ENCODE measurements at regions of chr14 and their contacts with region 1.

Region 1: DNA sequence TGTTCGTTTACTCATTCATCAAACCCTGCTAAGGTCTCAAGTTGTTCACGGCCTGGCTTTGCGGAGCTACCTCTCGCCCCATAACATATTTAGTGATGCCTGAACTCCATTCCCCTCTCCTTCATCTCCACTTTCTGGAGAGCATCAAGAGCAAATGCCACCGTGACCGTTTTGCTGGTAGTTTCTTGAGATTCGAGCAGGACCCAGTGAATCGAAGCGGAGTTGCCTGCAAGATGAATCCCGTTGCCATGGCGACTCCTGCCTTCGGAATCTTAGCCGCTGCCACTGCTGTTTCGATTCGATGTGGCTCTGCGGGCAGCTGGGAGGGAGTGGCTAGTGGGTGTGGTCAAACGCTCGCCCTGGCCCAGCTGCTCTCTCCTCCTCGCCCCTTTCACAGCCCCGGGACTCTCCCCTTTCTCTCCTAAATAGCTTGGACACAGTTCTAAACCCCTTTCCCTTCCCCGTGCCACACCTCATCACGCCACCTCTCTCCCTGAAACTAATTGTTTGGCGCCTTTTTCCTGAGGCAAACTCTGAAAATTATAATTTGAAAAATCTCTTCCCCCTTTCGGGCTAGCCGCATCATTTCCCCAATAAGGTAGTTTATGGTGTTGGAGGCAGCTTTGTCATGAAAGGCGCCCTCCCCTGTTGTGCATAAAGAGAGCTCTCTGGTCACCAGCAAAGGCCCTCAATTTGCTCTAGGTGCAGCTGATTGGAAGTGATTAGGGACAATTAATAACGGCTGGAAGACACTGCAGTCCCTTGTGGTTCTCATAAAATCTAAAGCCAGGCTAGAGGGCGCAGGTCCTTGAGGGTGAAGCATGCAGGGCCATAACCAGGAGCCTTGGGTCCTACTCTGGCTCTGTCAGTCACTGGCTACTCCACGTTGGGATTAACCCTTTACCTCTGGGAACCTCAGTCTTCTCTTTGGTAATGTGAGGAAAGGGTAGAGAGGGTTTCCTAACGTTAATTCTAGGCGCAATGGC is 1.6 kb downstream of the DAAM1 start:
- DNase-seq: peak; percentile 79
- H3K4me3 Mint-ChIP-seq: peak overlapping the region; percentile 95
- H3K27ac Mint-ChIP-seq: peak overlapping the region; percentile 61
- H3K4me1 Mint-ChIP-seq: peaks cover 17% of the 10 kb centered on the region
- H3K27me3 Mint-ChIP-seq: peaks cover 13% of the 10 kb centered on the region

Region 2: GRCh38 chr14:59297061-59297776 is 107.1 kb after region 1 on chr14:
- intact Hi-C with region 1: loop called (anchors 5 kb)
- DNase-seq: no peak
- H3K4me3 Mint-ChIP-seq: peak overlapping the region; percentile 37
- H3K27ac Mint-ChIP-seq: no peak overlapping the region
- H3K4me1 Mint-ChIP-seq: peaks cover 53% of the 10 kb centered on the region
- H3K27me3 Mint-ChIP-seq: peaks cover 1% of the 10 kb centered on the region

Region 3: DNA sequence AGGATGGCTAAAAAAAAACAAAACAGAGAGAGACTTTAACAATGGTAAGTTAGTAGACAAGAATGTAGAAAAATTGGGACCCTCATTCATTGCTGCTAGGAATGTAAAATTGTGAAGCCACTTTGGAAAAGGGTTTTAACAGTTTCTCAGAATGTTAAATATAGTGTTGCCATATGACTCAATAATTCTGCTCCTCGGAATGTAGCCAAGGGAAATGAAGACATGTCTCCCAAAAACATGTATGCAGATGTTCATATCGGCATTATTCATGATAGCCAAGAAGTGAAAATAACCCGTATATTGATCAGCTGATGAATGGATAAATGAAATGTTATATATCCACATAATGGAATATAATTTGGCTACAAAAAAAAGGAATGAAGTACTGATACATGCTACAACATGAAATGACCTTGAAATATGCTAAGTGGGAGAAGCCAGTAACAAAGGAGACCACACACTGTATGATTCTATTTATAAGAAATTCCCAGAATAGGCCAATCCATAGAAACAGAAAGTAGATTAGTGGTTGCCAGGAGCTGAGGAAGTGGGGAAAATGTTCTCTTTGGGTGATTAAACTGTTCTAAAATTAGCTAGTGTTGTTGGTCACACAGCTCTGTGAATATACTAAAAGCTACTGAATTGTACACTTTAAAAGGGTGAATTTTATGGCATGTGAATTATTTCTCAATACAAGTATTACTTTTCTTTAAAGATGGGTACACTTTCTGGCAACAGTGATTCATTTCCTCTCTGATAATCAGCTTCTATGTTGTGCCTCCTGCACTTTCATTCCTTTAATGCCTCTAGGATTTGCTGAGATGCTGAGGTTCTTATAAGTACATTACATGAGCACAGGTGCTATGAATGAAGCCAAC is 130.9 kb after region 1 on chr14:
- intact Hi-C with region 1: loop called (anchors 5 kb)
- DNase-seq: no peak
- H3K4me3 Mint-ChIP-seq: no peak overlapping the region
- H3K27ac Mint-ChIP-seq: no peak overlapping the region
- H3K4me1 Mint-ChIP-seq: peaks cover 9% of the 10 kb centered on the region
- H3K27me3 Mint-ChIP-seq: peaks cover 1% of the 10 kb centered on the region

Region 4: GRCh38 chr14:59483900-59484638 is 294.0 kb after region 1 on chr14 and contains the starts of genes JKAMP and L3HYPDH:
- intact Hi-C with region 1: loop called (anchors 1 kb)
- DNase-seq: peak; percentile 95
- H3K4me3 Mint-ChIP-seq: peak within 1 kb of the TSS; percentile 91
- H3K27ac Mint-ChIP-seq: peak within 1 kb of the TSS; percentile 84
- H3K4me1 Mint-ChIP-seq: peaks cover 47% of the 10 kb centered on the region
- H3K27me3 Mint-ChIP-seq: no peaks in the 10 kb centered on the region
- total RNA-seq, gene JKAMP: 26.0 and 29.6 TPM in 2 replicates
- total RNA-seq, gene L3HYPDH: 14.2 and 15.9 TPM in 2 replicates

Measured in activated T-helper 2 cell treated with anti-CD3 and anti-CD28 coated beads, Interferon-gamma antibody, Interleukin-2, Interleukin-4, amounts not matched to agents 10 μg/mL and 5 μg/mL and 100 μg/mL, durations not matched to agents 14 hours and 24 hours and 36 hours (primary cell).